ENCODE measurements at regions of chr12 and their contacts with region 1.

Region 1: GRCh38 chr12:112978163-112979040 is at the start of gene OAS2:
- DNase-seq: peak; percentile 85
- H3K4me3 Mint-ChIP-seq: peak within 1 kb of the TSS; percentile 94
- H3K27ac Mint-ChIP-seq: peak within 1 kb of the TSS; percentile 99
- H3K4me1 Mint-ChIP-seq: peaks cover 56% of the 10 kb centered on the region
- H3K27me3 Mint-ChIP-seq: no peaks in the 10 kb centered on the region
- total RNA-seq, gene OAS2: 113 and 119 TPM in 2 replicates

Region 2: GRCh38 chr12:112482733-112483132 is 495.7 kb before region 1 on chr12:
- intact Hi-C with region 1: no loop called
- DNase-seq: no peak
- H3K4me3 Mint-ChIP-seq: no peak overlapping the region
- H3K27ac Mint-ChIP-seq: no peak overlapping the region
- H3K4me1 Mint-ChIP-seq: peaks cover 11% of the 10 kb centered on the region
- H3K27me3 Mint-ChIP-seq: no peaks in the 10 kb centered on the region

Region 3: DNA sequence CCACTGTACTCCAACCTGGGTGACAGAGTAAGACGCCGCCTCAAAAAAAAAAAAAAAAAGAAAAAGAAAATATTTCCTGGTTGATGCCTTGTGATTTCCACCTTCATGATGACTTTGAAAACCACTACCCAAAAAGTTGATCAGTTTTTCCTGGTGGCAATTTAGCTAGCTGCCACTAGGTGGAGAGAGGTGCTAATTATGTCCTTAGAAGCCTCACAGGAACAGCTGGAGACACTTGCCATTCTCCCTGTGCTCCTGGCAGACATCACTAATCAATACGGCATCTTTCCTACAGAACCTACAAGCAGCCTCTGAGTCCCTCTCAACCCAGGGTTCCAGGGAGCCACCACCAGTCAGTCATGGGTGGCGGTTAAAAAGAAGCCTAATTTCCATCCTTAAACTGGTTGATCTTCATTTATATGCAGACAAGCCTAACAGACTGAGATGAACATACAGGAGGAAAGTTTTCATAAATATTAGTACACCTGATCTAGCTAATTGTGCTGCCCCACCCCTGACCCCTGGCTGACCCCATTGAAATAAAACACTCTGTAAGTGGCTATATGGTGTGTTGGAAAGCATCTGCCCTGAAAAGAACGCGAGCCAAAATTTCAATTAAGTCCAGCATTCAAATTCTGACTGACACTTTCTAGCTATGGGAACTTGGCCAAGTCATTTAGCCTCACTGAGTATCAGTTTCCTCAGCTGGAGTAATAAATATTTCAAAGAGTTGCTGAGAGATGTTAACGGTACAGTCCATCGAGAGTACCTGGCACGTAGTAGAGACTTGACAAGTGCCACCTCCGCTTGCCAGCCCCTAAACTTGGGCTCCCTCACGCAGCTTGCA is 77.9 kb before region 1 on chr12:
- intact Hi-C with region 1: loop called (anchors 1 kb)
- DNase-seq: peak; percentile 37
- H3K4me3 Mint-ChIP-seq: no peak overlapping the region
- H3K27ac Mint-ChIP-seq: no peak overlapping the region
- H3K4me1 Mint-ChIP-seq: peaks cover 44% of the 10 kb centered on the region
- H3K27me3 Mint-ChIP-seq: peaks cover 8% of the 10 kb centered on the region

Region 4: DNA sequence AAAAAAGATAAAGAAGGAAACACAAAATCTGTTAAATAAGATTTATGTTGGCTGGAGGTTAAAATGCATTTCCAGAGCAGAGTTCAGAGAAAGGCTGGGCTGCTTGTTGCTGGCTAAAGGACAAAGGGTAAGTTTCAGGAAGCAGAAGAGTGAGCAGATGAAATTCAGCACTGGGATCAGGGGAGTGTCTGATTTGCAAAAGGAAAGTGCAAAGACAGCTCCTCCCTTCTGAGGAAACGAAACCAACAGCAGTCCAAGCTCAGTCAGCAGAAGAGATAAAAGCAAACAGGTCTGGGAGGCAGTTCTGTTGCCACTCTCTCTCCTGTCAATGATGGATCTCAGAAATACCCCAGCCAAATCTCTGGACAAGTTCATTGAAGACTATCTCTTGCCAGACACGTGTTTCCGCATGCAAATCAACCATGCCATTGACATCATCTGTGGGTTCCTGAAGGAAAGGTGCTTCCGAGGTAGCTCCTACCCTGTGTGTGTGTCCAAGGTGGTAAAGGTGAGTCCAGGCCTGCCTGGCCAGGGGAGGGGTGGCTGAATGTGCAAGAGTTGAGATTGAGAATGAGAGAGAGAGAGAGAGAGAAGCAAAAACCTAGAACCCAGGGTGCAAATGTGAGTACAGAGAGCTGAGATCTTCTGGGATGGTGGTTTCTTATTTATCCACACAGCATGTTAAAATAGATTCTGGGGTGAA is 71.5 kb before region 1 on chr12 and contains the start of gene OAS1:
- intact Hi-C with region 1: loop called (anchors 1 kb)
- DNase-seq: peak; percentile 49
- H3K4me3 Mint-ChIP-seq: peak within 1 kb of the TSS; percentile 95
- H3K27ac Mint-ChIP-seq: peak within 1 kb of the TSS; percentile 95
- H3K4me1 Mint-ChIP-seq: peaks cover 93% of the 10 kb centered on the region
- H3K27me3 Mint-ChIP-seq: no peaks in the 10 kb centered on the region
- total RNA-seq, gene OAS1: 24.2 and 29.2 TPM in 2 replicates

Region 5: DNA sequence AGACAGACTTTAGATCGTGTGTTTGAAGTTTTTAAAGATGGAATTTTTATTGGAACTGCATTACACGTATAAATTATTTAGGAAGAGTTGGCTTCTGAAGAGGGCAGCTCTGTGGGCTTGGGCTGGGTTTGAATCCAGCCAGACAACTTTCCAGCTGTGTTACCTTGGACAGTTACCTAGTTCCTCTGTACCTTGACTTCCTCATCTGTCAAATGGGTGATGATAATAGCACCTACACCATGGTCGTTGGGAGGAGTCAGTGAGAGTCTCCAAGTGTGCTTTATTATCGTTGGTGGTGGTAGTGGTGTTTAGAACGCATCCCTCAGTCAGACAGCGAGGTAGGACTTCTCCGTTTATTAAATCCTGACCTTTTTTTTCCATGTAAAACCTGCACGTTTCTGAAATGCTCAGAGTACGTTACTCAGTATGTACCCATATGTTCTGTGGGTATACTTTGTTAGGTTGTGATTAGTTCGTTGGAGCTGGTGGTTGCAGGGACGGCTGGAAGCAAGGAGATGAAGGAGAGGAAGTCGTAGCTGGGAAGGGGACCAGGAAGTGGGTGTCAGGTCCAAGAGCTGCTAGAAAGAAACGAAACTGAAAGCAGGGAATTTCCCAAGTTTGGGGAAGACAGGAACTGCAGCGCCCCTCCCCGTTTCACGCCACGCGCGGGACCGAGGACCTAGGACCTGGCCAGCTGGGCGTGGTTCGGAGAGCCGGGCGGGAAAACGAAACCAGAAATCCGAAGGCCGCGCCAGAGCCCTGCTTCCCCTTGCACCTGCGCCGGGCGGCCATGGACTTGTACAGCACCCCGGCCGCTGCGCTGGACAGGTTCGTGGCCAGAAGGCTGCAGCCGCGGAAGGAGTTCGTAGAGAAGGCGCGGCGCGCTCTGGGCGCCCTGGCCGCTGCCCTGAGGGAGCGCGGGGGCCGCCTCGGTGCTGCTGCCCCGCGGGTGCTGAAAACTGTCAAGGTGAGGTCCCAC is 40.4 kb before region 1 on chr12 and contains the start of gene OAS3:
- intact Hi-C with region 1: loop called (anchors 1 kb)
- DNase-seq: peak; percentile 82
- H3K4me3 Mint-ChIP-seq: peak within 1 kb of the TSS; percentile 91
- H3K27ac Mint-ChIP-seq: peak within 1 kb of the TSS; percentile 95
- H3K4me1 Mint-ChIP-seq: peaks cover 60% of the 10 kb centered on the region
- H3K27me3 Mint-ChIP-seq: no peaks in the 10 kb centered on the region
- total RNA-seq, gene OAS3: 50.1 and 54.2 TPM in 2 replicates

Region 6: DNA sequence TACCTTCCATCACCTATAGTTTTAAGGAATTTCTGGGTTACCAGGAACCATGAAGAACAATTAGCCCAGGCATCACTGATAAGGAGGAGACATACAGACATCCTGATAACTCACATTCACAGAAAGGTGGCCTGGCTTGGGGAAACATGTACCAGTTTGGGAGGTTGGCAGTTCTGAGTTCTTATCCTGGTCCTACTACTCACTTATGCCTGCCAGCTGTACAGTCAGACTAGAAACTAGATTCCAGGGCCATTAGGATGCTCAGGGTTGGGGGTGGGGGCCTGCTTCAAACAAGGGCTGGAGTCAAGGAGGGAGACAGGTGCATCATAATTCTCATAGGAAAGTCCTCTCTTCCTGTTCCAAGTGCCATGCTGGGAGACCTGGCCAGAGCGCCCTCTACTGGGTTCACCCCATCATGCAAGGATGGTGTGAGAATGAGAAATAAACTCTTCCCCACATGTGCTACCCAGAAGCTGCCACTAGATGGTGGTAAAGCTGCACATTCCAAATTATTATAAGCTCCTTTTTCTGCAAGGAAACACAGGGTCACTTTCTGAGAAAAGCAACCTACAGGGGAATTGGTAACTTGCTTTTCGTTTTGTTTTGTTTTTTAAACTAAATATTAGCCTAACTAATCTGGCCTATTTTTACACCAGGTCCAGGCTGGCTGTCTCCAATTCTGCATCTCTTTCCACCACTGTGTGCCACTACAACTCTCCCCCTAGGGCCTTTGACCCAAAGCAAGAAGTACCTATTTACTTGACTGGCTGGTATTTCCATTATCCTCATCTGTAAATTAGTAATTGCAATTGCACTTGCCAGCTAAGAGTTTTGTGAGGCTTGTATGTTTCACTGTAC is 14.4 kb after region 1 on chr12:
- intact Hi-C with region 1: loop called (anchors 1 kb)
- DNase-seq: peak; percentile 43
- H3K4me3 Mint-ChIP-seq: no peak overlapping the region
- H3K27ac Mint-ChIP-seq: peak overlapping the region; percentile 43
- H3K4me1 Mint-ChIP-seq: peaks cover 57% of the 10 kb centered on the region
- H3K27me3 Mint-ChIP-seq: no peaks in the 10 kb centered on the region

Region 7: GRCh38 chr12:113075137-113075683 is 96.8 kb after region 1 on chr12:
- intact Hi-C with region 1: no loop called
- DNase-seq: no peak
- H3K4me3 Mint-ChIP-seq: no peak overlapping the region
- H3K27ac Mint-ChIP-seq: no peak overlapping the region
- H3K4me1 Mint-ChIP-seq: peaks cover 9% of the 10 kb centered on the region
- H3K27me3 Mint-ChIP-seq: no peaks in the 10 kb centered on the region

Region 8: GRCh38 chr12:113358381-113359132 is 380.2 kb after region 1 on chr12 and contains the start of gene PLBD2:
- intact Hi-C with region 1: loop called (anchors 5 kb)
- DNase-seq: peak; percentile 89
- H3K4me3 Mint-ChIP-seq: peak within 1 kb of the TSS; percentile 89
- H3K27ac Mint-ChIP-seq: peak within 1 kb of the TSS; percentile 69
- H3K4me1 Mint-ChIP-seq: peaks cover 13% of the 10 kb centered on the region
- H3K27me3 Mint-ChIP-seq: peaks cover 4% of the 10 kb centered on the region
- total RNA-seq, gene PLBD2: 15.3 and 16.3 TPM in 2 replicates

Measured in activated T-helper 1 cell treated with anti-CD3 and anti-CD28 coated beads, Interleukin-12 subunit alpha, Interleukin-12 subunit beta, Interleukin-2, Interleukin-4 antibody, amounts not matched to agents 30 ng/mL and 10 ng/mL and 1 ng/mL, durations not matched to agents 14 hours and 24 hours and 36 hours (primary cell).